Activated CD4-positive, alpha-beta memory T cell treated with anti-CD3 and anti-CD28 coated beads, Interleukin-2, amount 10 ng/mL, durations not matched to agents 7 days and 5 days (primary cell): ENCODE measurements at regions of chr16 and their contacts with region 1.

Region 1: DNA sequence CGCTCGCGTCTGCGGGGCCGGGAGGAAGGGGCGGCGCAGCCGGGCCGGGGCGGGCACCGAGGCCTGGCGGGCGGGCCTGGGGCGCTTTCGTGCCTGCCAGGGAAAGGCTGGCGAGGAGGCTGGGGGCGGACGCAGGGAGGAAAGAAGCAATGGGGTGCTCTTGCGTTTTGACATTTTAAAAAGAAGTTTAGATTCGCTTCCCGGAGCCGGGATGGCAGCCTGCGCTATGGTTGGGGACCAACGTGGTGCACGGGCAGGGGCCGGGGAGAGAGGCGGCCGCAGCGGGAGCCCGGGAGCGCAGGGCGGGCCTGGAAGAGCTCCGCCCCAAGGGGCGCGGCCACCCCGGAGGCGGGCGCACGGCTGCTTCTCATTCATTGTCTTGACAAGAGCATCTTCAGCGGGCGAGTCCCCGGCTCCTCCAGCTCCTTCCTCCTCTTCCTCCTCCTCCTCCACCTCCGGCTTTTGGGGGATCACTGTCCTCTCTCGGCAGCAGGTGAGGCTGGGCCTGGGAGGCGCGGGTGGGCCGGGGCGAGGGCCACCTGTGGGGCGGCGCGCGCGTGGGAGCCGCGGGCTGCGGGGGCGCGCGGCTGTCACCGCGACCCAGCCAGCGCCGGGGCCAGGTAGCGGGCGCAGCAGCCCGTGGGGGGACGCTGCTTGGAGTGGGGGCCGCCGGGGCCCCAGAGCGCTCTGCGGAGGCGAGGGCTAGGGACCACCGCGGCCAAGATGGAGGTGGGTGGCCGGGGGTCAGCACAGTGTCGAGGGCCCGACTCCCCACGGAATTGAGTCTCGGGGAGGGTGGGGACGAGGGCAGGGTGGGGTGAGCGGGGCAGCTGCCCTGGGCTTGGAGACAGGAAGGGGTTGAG is at the start of gene CORO1A:
- DNase-seq: peak; percentile 90
- H3K4me3 Mint-ChIP-seq: peak within 1 kb of the TSS; percentile 100
- H3K27ac Mint-ChIP-seq: peak within 1 kb of the TSS; percentile 99
- H3K4me1 Mint-ChIP-seq: peaks cover 29% of the 10 kb centered on the region
- H3K27me3 Mint-ChIP-seq: no peaks in the 10 kb centered on the region
- total RNA-seq, gene CORO1A: 1,737 to 1,754 TPM

Region 2: DNA sequence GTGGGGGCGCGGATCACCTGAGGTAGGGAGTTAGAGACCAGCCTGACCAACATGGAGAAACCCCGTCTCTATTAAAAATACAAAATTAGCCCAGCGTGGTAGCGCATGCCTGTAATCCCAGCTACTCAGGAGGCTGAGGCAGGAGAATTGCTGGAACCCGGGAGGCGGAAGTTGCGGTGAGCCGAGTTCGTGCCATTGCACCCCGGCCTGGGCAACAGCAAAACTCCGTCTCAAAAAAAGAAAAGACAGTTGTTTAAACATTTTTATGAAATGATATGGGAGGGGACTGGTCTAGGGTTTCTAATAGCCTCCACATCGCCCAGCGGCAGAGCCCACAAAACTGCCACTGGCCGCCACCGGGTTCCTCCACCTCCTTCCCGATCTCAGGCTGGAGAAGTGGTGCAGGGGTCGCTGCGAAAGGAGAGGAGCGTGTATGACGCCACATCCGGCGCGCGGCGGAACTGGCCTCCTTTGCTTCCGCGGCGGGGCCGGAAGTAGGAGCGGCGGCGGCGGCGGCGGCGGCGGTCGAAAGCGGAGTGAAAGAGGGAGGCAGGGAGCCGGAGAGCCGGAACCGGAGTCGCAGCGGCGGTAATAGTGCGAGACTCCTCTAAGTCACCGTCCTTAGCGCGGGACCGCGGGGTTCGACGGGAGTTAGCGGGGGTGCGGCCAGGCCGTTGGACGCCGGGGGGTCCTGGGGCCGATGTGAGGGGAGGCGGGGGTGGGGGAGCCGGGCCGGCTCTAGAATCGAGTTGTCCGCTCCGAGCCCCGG is 107.8 kb before region 1 on chr16 and contains the start of gene PPP4C:
- CTCF ChIA-PET with region 1: interaction called, 4 read pairs
- POLR2A ChIA-PET with region 1: interaction called, 40 read pairs
- DNase-seq: peak; percentile 95
- H3K4me3 Mint-ChIP-seq: peak within 1 kb of the TSS; percentile 97
- H3K27ac Mint-ChIP-seq: peak within 1 kb of the TSS; percentile 92
- H3K4me1 Mint-ChIP-seq: peaks cover 46% of the 10 kb centered on the region
- H3K27me3 Mint-ChIP-seq: no peaks in the 10 kb centered on the region
- total RNA-seq, gene PPP4C: 146 to 147 TPM

Region 3: DNA sequence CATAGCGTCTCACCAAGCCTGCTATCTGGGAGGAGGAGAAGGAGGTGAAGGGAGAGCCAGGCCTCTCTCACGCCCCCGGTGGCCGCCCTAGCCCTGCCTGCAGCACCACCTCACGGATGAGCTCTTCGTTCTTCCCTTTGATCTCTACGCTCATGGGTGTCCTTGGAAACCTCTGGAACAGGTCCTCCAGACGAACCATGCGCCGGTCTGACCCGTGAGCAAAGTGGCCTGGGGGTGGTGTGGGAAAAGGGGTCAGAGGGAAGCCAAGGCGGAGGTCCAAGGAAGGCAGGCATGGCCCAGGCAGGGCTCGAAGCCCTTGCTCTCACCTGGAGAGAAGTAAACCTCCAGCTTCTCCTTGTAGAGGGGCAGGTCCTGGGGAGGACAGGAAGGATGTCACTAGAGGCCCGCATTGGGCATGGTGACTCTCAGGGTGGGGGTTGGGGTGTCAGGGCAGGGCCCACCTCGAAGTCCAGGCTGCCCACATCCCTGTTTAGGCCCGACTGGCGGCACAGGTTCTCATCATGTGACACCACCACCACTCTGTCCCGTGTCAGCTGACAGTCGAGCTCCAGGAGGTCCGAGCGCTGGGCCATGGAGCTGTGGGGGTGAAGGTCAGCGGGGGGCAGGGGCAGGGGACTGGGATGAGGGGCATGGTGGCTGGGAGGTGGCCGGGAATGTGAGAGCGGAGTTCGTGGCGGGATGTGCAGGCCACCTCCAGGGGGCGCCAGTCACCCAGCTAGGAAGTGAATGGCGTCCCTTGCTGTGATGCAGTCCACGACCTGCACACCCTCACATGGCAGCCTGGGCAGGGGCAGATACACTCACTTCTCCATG is 71.0 kb before region 1 on chr16:
- CTCF ChIA-PET with region 1: interaction called, 9 read pairs
- POLR2A ChIA-PET with region 1: interaction called, 32 read pairs
- DNase-seq: peak; percentile 71
- H3K4me3 Mint-ChIP-seq: no peak overlapping the region
- H3K27ac Mint-ChIP-seq: peak overlapping the region; percentile 26
- H3K4me1 Mint-ChIP-seq: peaks cover 16% of the 10 kb centered on the region
- H3K27me3 Mint-ChIP-seq: no peaks in the 10 kb centered on the region

Region 4: DNA sequence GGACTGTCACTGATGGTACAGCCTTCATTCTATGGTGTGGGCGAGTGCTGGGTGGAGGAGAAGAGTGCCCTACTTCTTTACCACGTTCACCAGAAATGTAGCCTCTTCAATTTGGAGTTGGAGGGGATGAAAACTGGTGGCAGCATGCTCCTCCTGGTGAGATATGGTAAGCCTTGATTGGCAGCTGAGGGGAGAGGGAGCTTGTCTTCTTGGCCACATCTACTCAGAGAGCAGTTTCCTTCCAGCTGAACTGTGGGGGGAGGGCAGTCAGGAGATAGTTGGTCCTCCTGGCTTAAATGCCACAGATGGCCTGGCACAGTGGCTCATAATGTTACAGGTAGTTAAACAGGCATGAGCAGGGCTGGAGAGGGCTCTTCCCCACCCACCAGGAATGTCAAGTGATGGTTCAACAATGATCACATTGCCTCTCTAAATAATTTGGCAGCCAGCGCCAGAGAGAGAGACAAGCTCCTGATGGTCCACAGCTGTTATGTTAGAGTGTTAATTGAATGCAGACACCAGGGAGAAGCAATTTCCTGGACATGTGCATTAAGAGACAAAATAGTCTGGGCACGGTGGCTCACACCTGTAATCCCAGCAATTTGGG is 51.5 kb before region 1 on chr16:
- CTCF ChIA-PET with region 1: interaction called, 3 read pairs
- POLR2A ChIA-PET with region 1: interaction called, 41 read pairs
- DNase-seq: no peak
- H3K4me3 Mint-ChIP-seq: no peak overlapping the region
- H3K27ac Mint-ChIP-seq: peak overlapping the region; percentile 52
- H3K4me1 Mint-ChIP-seq: peaks cover 11% of the 10 kb centered on the region
- H3K27me3 Mint-ChIP-seq: no peaks in the 10 kb centered on the region

Region 5: DNA sequence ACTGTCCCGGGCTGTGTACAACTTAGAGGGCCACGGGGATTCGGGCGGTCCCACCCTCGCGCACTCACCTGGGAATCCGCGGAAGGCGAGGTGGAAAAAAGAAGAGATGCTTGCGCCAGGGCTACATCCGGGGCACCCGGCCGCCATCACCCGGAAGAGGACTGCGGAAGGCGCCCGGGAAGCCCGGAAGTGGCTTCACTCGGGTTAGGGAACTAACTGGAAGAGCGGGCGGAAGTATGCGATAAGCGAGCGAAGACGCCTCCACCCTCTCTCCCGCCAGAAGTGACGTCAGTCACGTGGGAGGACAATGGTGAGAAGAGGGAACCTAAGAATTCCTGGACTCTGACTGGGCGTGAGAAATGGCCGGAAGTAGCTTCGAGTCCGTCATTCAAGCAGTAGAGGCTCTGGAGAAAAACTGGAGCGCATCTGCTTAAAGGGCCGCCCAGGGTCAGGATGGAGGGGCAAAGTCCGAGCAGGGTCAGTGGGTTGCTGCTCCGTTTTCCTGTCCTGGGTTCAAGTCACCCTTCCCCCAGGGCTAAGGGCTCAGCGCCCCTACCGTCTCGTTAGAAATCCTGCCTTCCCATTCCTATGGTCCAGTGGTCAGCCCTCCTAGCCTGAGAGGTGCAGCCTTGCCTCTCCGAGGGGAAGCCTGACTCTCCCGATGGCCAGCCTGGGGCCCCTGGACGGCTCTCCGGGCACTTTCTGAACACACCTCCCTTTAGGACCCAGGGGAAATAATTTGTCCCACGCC is 171.9 kb after region 1 on chr16 and contains the start of gene CD2BP2:
- CTCF ChIA-PET with region 1: no interaction called
- POLR2A ChIA-PET with region 1: interaction called, 11 read pairs
- DNase-seq: peak; percentile 88
- H3K4me3 Mint-ChIP-seq: peak within 1 kb of the TSS; percentile 90
- H3K27ac Mint-ChIP-seq: peak within 1 kb of the TSS; percentile 93
- H3K4me1 Mint-ChIP-seq: peaks cover 66% of the 10 kb centered on the region
- H3K27me3 Mint-ChIP-seq: no peaks in the 10 kb centered on the region
- total RNA-seq, gene CD2BP2: 75.6 to 75.9 TPM